ENCODE measurements at regions of chr9 and their contacts with region 1.

Region 1: DNA sequence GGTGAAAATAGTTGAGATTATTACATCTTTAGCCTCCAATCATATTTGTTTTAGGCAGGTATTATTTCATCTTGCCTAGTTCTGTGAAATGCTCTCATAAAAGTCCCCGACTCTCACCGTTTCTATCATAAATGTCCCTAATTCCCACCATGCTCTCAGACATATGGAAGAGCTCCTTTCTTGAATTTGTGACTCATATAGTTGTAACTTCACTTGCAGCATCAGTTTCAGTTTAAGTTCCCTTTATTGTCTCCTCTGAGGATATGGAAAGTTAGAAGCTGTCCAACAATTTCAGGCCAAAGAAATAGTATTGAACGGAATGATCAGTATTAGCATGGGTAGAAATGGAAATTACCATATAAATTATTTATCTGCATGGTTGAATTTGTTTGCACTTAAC is 187.5 kb upstream of the NR4A3 start:
- DNase-seq: no peak
- ATAC-seq: no peak
- H3K4me3 ChIP-seq: no peak overlapping the region
- H3K27ac ChIP-seq: no peak overlapping the region
- H3K4me1 ChIP-seq: no peaks in the 10 kb centered on the region
- H3K27me3 ChIP-seq: no peaks in the 10 kb centered on the region
- CTCF ChIP-seq: no peak
- EP300 ChIP-seq: no peak
- POLR2A ChIP-seq: no peak
- RAD21 ChIP-seq: no peak

Region 2: DNA sequence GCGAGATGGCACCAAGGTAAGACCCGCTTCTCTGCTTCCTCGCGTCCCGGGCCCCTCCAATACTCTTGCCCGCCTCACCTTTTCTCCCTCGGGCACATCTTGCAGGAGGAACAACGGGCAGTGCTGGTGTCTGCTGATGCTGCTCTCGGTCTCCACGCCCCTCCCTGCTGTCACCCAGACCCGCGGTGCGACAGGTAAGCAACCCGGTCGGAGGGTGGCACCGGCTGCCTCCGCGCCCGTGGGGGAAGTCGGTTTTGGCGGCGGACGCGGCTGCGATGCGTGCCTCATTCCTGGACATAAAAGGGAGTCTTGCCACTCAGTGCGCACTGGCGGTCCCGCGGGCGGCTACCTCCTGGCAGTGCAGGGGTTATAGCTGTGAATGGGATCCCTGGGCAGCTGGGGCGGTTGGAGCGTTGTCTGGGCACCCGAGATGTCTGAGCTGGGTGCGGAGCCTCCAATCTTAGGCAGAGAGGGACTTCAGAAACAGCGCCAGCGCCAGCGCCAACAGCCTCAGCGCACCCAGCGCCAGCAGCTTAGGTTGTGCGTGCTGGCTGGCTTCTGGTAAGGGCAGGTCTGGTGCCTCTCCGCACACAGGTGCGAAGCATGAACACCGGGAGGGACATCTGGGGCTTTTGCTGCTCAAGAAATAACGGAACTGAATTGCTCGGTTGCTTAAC is 690.0 kb before region 1 on chr9:
- CTCF ChIA-PET with region 1: no interaction called
- POLR2A ChIA-PET with region 1: no interaction called
- in situ Hi-C with region 1: no loop called
- intact Hi-C with region 1: no loop called
- DNase-seq: no peak
- ATAC-seq: no peak
- H3K4me3 ChIP-seq: peak overlapping the region; percentile 38
- H3K27ac ChIP-seq: no peak overlapping the region
- H3K4me1 ChIP-seq: peaks cover 13 to 21% of the 10 kb centered on the region in 2 experiments
- H3K27me3 ChIP-seq: peaks cover 0 to 17% of the 10 kb centered on the region in 2 experiments; a peak in 3 of 5 replicates
- CTCF ChIP-seq: no peak
- EP300 ChIP-seq: no peak
- POLR2A ChIP-seq: no peak
- RAD21 ChIP-seq: no peak

Region 3: GRCh38 chr9:99690573-99690972 is 56.4 kb after region 1 on chr9:
- CTCF ChIA-PET with region 1: no interaction called
- POLR2A ChIA-PET with region 1: no interaction called
- in situ Hi-C with region 1: no loop called
- intact Hi-C with region 1: loop called (anchors 10 kb)
- DNase-seq: no peak
- ATAC-seq: no peak
- H3K4me3 ChIP-seq: no peak overlapping the region
- H3K27ac ChIP-seq: no peak overlapping the region
- H3K4me1 ChIP-seq: no peaks in the 10 kb centered on the region; a peak in 1 of 5 replicates
- H3K27me3 ChIP-seq: no peaks in the 10 kb centered on the region
- CTCF ChIP-seq: no peak
- EP300 ChIP-seq: no peak
- POLR2A ChIP-seq: no peak
- RAD21 ChIP-seq: no peak

Measured in K562 (cell line).